ENCODE measurements at regions of chr3 and their contacts with region 1.

Region 1: GRCh38 chr3:11060500-11061251 is 68.1 kb downstream of the SLC6A1 start:
- DNase-seq: peak in 1 of 2 donors; percentile 79
- H3K4me3 ChIP-seq: peak overlapping the region; percentile 4 to 51
- H3K27ac ChIP-seq: no peak overlapping the region
- H3K4me1 ChIP-seq: peaks cover 0 to 8% of the 10 kb centered on the region in 2 donors
- H3K27me3 ChIP-seq: no peaks in the 10 kb centered on the region
- CTCF ChIP-seq: peak; percentile 94 to 98 (median 95)

Region 2: DNA sequence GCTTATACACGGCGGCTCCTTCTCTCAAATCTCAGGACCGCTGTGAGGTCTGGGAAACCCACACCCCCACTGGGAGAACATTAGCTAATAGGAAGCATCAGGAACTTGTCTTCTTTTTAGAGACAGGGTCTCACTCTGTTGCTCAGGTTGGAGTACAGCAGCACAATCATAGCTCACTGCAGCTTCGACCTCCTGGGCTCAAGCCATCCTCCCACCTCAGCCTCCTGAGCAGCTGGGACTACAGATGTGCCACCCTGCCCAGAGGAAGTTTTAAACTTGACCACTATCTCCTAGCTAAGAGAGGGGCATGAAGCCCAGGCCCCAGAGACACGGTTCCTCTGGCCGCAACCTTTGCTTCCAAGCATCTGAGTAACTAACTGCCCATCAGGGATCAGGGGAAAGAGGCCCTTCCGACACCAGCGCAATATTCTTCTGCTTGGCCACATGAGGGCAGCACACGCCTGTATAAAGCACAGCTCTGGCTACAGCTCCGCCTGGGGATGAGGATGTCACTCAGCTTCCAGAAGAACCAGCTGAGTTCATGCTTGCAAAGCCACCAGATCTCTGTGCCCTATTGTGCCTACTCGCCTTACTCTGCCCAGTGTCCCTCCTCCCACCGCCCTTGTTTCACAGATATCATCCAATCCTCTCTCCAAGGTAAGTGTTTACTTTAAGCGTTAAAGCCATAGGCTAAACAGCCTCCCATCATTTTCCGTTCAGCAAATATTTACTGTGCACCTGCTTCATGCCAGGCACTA is 302.2 kb before region 1 on chr3:
- intact Hi-C with region 1: loop called (anchors 1 kb)
- DNase-seq: no peak
- H3K4me3 ChIP-seq: no peak overlapping the region
- H3K27ac ChIP-seq: no peak overlapping the region
- H3K4me1 ChIP-seq: no peaks in the 10 kb centered on the region
- H3K27me3 ChIP-seq: no peaks in the 10 kb centered on the region
- CTCF ChIP-seq: peak; percentile 49 to 59 (median 53)

Region 3: DNA sequence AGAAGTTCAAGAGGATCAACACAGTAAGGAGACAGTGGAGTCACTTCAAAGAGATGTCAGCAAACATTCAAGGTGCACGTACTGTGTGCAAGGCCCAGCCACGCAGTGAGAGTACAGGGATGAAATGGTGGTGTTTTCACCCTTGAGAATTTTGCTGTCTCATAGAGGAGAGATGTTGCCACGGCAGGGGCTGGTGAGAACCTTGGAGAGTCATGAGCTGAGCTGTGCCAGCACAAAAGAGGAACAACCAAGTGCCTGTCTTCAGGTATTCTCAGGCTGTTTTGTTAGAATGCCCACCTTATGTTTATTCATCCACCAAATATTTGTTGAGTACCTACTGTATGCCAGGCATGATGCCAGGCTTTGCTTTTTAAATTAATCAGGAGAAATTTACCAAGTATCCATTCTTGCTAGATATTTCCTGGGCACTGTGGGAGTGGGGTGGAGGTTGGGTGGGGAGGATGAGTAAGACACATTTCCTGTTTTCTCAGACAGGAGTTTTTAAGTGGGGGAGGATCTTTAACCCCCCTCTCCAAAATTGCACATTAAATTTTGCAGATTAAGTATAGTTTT is 172.1 kb before region 1 on chr3:
- intact Hi-C with region 1: no loop called
- DNase-seq: no peak
- H3K4me3 ChIP-seq: no peak overlapping the region
- H3K27ac ChIP-seq: no peak overlapping the region
- H3K4me1 ChIP-seq: no peaks in the 10 kb centered on the region
- H3K27me3 ChIP-seq: no peaks in the 10 kb centered on the region
- CTCF ChIP-seq: no peak

Region 4: DNA sequence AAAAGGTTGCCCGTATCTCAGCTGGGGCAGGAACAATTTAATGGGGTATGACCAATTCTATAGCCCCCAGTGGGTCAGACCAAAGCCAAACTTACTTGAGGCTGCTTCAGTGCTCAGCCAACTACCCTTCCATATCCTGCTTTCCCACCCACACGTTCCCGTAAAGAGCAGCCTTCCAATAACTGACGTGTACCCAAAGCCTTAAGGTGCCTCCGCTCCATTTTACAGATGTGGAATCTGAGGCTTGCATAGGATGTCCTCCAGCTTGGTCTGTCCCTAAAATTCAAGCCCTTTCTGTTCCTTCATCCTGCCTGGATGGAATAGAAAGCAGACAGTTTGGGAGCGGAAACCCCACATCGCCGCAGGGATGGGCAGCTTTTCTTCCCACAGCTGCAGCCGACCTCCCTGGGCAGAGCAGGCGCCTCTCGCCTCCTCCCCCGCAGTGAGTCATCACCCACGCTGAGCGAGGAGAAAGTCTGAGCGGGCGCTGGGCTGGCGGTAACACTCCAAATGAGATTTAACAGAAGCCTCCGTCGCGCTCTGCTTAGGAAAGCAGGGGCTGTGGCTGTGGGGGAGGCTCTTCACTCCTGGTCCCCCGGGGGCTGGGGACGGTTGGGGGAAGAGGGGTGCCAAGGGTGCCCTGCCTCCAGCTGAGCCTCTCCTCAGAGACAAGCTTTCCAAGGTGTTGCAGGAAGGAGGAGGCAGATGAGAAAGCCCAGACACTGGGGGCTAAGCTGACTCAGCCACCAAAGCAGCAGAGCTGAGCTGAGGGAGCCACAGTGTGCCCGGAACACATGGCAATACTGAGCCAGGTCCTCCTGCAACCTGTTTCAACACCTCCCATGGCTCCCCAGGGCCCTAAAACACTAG is 35.8 kb after region 1 on chr3:
- intact Hi-C with region 1: loop called (anchors 5 kb)
- DNase-seq: peak; percentile 54 to 91
- H3K4me3 ChIP-seq: peak overlapping the region; percentile 39 to 51
- H3K27ac ChIP-seq: peak overlapping the region; percentile 82 to 84
- H3K4me1 ChIP-seq: peaks cover 0 to 4% of the 10 kb centered on the region in 2 donors
- H3K27me3 ChIP-seq: no peaks in the 10 kb centered on the region
- CTCF ChIP-seq: no peak

Region 5: GRCh38 chr3:11155341-11156025 is 94.8 kb after region 1 on chr3:
- intact Hi-C with region 1: loop called (anchors 1 kb)
- DNase-seq: peak in 1 of 2 donors; percentile 91
- H3K4me3 ChIP-seq: peak overlapping the region; percentile 80 to 87
- H3K27ac ChIP-seq: peak overlapping the region; percentile 94 to 96
- H3K4me1 ChIP-seq: peaks cover 8 to 31% of the 10 kb centered on the region in 2 donors
- H3K27me3 ChIP-seq: no peaks in the 10 kb centered on the region
- CTCF ChIP-seq: peak; percentile 65 to 75 (median 66)

Region 6: DNA sequence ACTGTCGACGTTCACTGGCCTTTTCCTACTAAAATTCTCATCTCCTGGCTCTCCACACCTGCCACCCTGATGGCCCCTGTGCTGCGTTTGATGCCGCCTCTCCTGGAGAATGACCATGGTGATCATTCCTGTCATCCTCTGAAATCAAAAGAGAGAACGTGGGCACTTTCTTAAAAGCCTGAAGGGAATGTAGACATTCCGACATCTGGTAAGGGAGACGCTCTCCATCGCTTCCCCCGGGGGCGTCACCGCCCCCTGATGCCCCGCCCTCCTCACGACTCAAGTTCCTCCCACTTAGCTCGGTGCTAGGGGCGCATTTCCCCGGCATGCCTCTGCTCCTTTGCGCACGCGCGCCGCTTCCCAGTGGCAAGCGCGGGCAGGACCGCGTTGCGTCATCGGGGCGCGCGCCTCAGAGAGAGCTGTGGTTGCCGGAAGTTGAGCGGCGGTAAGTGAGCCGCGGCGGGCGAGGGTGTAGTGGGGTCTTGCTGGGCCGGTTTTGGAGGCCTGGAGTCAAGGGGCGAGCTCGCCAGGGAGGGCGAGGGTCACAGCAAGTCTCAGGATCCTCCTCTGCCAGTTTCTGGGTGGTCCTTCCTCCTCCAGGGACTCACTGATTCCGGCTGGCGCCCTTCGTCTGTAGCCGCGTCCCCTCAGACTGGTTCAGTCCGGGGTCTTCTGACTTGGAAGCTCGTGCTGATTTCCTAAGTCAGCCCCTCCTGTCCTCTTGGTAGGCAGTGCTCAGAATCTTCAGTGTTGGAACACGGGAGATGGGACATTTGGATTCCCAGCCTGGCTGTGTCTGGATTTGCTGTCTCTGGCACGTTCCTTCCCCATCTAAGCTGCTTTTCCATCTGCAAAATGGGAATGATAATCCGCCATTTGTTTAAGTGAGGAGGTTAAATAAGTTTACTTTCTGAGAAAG is 211.6 kb after region 1 on chr3 and contains the start of gene ATG7:
- intact Hi-C with region 1: loop called (anchors 5 kb)
- DNase-seq: peak; percentile 91 to 99
- H3K4me3 ChIP-seq: peak within 1 kb of the TSS; percentile 89 to 91
- H3K27ac ChIP-seq: peak within 1 kb of the TSS; percentile 74 to 85
- H3K4me1 ChIP-seq: peaks cover 8 to 14% of the 10 kb centered on the region in 2 donors
- H3K27me3 ChIP-seq: no peaks in the 10 kb centered on the region
- CTCF ChIP-seq: no peak
- total RNA-seq, gene ATG7: 48.5 TPM

Region 7: GRCh38 chr3:12273045-12273695 is 1212.5 kb after region 1 on chr3:
- intact Hi-C with region 1: no loop called
- DNase-seq: no peak
- H3K4me3 ChIP-seq: no peak overlapping the region
- H3K27ac ChIP-seq: no peak overlapping the region
- H3K4me1 ChIP-seq: no peaks in the 10 kb centered on the region
- H3K27me3 ChIP-seq: no peaks in the 10 kb centered on the region
- CTCF ChIP-seq: no peak

Measured in ascending aorta (tissue), 2 donors.